ENCODE measurements at regions of chr2 and their contacts with region 1.

Region 1: GRCh38 chr2:74529357-74530238 is at the starts of genes AUP1 and HTRA2:
- DNase-seq: peak; percentile 100
- H3K4me3 ChIP-seq: peak within 1 kb of the TSS; percentile 97
- H3K27ac ChIP-seq: peak within 1 kb of the TSS; percentile 91
- H3K4me1 ChIP-seq: peaks cover 16% of the 10 kb centered on the region
- H3K27me3 ChIP-seq: no peaks in the 10 kb centered on the region
- CTCF ChIP-seq: no peak
- total RNA-seq, gene AUP1: 114 and 126 TPM in 2 replicates
- total RNA-seq, gene HTRA2: 35.1 and 37.7 TPM in 2 replicates

Region 2: GRCh38 chr2:74250189-74250631 is 279.4 kb before region 1 on chr2:
- CTCF ChIA-PET with region 1: interaction called, 7 read pairs
- POLR2A ChIA-PET with region 1: no interaction called
- intact Hi-C with region 1: loop called (anchors 5 kb)
- DNase-seq: peak; percentile 47
- H3K4me3 ChIP-seq: no peak overlapping the region
- H3K27ac ChIP-seq: no peak overlapping the region
- H3K4me1 ChIP-seq: no peaks in the 10 kb centered on the region
- H3K27me3 ChIP-seq: no peaks in the 10 kb centered on the region
- CTCF ChIP-seq: peak; percentile 83

Region 3: DNA sequence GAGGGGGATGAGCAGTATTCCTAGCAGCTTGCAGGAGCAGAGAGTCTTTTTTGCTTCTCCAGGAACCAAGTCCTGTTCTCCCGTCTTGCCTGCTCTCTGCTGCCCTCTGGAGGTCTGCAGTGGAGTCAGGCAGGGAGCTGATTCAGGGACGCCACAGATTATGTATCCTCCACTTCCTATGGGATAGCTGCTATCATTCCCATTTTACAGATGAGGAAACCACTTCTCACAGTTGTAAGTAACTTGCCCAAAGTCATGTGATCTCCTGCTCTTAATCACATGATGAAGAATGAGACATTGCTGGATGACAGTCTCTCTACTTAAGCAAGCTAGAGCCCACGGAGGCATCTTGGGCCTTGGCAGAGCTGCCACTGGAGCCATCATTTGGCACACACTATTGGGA is 194.7 kb before region 1 on chr2:
- CTCF ChIA-PET with region 1: interaction called, 3 read pairs
- POLR2A ChIA-PET with region 1: no interaction called
- intact Hi-C with region 1: loop called (anchors 10 kb)
- DNase-seq: peak; percentile 78
- H3K4me3 ChIP-seq: no peak overlapping the region
- H3K27ac ChIP-seq: no peak overlapping the region
- H3K4me1 ChIP-seq: no peaks in the 10 kb centered on the region
- H3K27me3 ChIP-seq: no peaks in the 10 kb centered on the region
- CTCF ChIP-seq: peak; percentile 89

Region 4: DNA sequence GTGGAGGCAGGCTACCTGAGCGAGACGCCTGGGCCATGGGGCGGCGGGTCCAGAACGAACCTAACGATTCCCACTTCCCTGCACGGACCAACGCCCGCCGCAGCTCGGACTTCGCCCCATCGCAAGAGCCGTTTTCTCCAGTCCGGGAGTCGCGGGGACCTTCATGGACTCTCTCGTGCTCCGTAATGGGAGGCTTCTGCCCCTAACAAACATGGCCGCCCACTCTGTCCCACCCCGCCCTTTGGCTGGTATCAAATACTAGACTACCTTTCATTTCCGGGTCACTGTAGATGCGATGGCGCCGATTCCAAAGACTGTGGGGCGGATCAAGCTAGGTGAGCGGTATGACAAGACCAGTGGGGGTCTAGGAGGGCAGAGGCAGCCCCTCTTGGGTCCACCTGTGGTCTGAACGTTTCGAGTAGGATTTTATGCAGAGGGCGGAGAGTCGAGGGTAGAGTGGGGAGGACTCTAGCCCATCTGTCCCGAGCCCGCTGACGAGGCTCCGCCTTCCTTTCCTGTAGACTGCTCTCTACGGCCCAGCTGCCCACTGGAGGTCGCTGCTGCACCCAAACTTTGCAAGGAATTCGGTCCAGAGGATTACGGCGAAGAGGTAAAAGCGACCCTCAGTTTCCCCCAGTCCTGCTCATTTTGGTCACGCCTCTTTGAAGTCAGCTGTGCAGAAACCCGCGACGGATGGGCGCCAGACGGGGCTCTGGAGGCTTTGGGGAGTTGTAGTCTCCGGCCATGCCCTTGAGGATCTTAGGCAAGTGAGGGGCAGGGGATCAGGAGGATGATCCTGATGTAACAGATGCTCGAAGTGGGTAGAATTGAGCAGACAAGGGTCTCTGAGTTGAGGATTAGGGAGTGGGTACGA is 46.6 kb before region 1 on chr2 and contains the starts of genes CCDC142 and TTC31:
- CTCF ChIA-PET with region 1: interaction called, 4 read pairs
- POLR2A ChIA-PET with region 1: no interaction called
- intact Hi-C with region 1: loop called (anchors 1 kb)
- DNase-seq: peak; percentile 97
- H3K4me3 ChIP-seq: peak within 1 kb of the TSS; percentile 84
- H3K27ac ChIP-seq: peak within 1 kb of the TSS; percentile 84
- H3K4me1 ChIP-seq: peaks cover 18% of the 10 kb centered on the region
- H3K27me3 ChIP-seq: no peaks in the 10 kb centered on the region
- CTCF ChIP-seq: peak; percentile 97
- total RNA-seq, gene CCDC142: 20.4 and 27.4 TPM in 2 replicates
- total RNA-seq, gene TTC31: 25.8 and 28.6 TPM in 2 replicates

Region 5: DNA sequence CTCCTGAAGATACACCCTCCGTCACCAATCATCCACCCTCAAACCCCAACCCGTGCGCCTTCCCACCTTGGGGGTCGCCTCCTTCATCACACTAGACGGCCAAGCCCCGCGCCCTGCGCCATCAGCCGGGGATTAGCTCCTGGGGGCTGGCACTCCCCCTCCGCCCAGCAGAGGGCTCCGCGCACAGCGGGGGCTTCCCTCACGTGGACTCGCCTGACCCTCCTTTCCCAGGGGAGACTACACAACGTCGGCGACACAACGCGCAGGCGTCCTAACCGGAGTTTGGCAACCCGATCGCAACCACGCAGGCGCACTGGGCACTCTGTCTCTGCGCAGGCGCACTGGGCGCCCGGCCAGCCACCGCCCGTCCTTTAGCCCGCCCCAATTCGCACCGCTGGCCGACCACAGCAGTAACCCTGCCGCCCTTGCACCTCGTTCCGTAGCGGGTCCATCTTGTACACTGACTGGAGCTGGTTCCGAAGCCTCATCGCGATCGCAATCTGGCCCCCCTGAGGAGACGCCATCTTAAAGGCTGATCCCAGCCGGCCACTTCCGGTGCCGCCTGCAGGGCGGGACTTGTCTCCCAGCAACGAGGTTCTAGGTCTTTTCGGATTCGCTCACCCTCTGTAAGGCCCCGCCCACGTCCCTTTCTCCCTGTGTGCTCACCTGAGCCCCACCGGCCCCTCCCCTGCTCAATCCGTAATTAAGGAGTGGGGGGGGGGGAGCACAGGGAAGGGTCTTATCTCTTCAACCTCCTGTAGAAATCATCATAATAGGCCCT is 22.3 kb before region 1 on chr2 and contains the start of gene PCGF1:
- CTCF ChIA-PET with region 1: interaction called, 3 read pairs
- POLR2A ChIA-PET with region 1: no interaction called
- intact Hi-C with region 1: loop called (anchors 2 kb)
- DNase-seq: peak; percentile 99
- H3K4me3 ChIP-seq: peak within 1 kb of the TSS; percentile 63
- H3K27ac ChIP-seq: peak within 1 kb of the TSS; percentile 97
- H3K4me1 ChIP-seq: peaks cover 13% of the 10 kb centered on the region
- H3K27me3 ChIP-seq: no peaks in the 10 kb centered on the region
- CTCF ChIP-seq: peak; percentile 72
- total RNA-seq, gene PCGF1: 30.9 and 33.0 TPM in 2 replicates

Measured in A673 (cell line).